Heart right ventricle (tissue), 16 donors: ENCODE measurements at regions of chr20 and their contacts with region 1.

Region 1: GRCh38 chr20:59455402-59456341 is 148.7 kb upstream of the PHACTR3 start:
- DNase-seq: peak in 1 of 2 donors; percentile 28
- ATAC-seq: peak in 7 of 8 donors; percentile 39 to 86 (median 54)
- H3K4me3 ChIP-seq: no peak overlapping the region
- H3K27ac ChIP-seq: no peak overlapping the region
- H3K4me1 ChIP-seq: peaks cover 0 to 16% (median 4%) of the 10 kb centered on the region in 9 donors
- H3K27me3 ChIP-seq: peaks cover 0 to 43% (median 15%) of the 10 kb centered on the region in 7 donors
- CTCF ChIP-seq: peak; percentile 11 to 66 (median 55)

Region 2: GRCh38 chr20:58481481-58482021 is 974.1 kb before region 1 on chr20:
- intact Hi-C with region 1: loop called in 1 of 10 experiments (anchors 5 kb)
- DNase-seq: peak; percentile 36 to 38
- ATAC-seq: peak in 6 of 8 donors; percentile 21 to 70 (median 60)
- H3K4me3 ChIP-seq: no peak overlapping the region
- H3K27ac ChIP-seq: peak overlapping the region in 4 of 10 donors; percentile 28 to 57 (median 39)
- H3K4me1 ChIP-seq: peaks cover 0 to 8% (median 0%) of the 10 kb centered on the region in 9 donors
- H3K27me3 ChIP-seq: peaks cover 0 to 6% (median 0%) of the 10 kb centered on the region in 7 donors
- CTCF ChIP-seq: peak in 8 of 9 donors; percentile 18 to 58 (median 45)

Region 3: DNA sequence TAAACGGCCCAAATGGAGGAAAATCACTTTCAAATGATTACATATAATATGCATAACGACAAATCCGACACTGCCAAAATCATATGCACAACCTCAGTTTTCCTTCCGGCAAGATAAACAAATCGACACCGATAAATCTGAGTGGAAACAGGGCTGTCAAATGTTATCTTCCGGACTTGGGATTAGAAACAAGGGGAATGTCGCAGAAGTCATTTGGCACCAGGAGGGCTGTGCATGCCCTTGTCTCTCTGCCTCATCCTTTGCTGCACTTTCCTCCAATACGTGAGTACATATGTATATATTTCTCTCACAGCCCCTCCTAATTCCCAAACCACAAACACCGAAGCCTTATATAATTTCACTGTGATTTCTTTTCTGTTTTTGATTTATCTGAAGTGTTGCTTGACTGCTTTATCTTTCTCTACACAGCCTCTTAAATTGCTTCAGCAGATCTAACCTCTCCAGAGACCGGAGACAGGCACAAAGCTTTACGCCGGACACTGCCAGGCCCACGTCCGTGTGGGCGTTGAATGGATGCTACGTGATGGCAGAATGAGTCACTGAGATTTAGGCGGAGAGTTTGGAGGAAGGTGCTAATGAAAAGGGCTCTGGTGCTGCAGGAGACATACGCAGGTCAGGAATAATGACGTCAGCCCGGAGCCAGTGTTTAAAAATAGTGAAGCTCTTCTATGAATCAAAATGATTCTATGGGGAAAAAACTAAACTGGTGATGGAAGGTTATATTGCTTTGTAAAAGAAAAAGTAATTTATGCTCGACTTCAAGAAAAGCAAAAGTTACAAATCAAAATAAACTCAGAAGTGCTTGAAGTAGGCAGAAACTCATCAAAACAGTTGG is 392.1 kb before region 1 on chr20:
- intact Hi-C with region 1: loop called in 1 of 10 experiments (anchors 2 kb)
- DNase-seq: peak; percentile 42 to 56
- ATAC-seq: peak; percentile 69 to 99 (median 96)
- H3K4me3 ChIP-seq: peak overlapping the region in 6 of 10 donors; percentile 1 to 39 (median 10)
- H3K27ac ChIP-seq: peak overlapping the region in 8 of 10 donors; percentile 19 to 70 (median 58)
- H3K4me1 ChIP-seq: peaks cover 0 to 21% (median 14%) of the 10 kb centered on the region in 9 donors
- H3K27me3 ChIP-seq: peaks cover 0 to 25% (median 0%) of the 10 kb centered on the region in 7 donors
- CTCF ChIP-seq: no peak

Region 4: DNA sequence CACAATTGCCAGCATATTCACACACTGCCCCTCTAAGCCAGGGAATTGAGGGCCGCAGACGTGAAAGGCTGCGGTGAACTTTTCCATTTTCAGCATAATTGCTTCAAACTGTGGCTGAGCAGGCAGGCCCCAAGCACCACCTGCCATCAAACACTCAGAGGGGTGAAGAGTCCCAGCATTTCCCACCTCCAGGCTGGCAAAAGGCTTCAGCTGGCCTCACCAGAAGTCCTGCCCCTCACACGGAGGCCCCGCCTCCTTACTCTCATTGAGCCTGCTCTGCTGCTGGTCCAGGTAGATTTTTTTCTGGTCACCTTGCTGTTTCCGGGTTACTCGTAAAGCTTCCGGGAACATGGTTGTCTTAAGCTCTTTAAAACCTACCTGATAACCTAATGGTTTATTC is 361.1 kb before region 1 on chr20:
- intact Hi-C with region 1: loop called in 1 of 10 experiments (anchors 10 kb)
- DNase-seq: no peak
- ATAC-seq: no peak
- H3K4me3 ChIP-seq: no peak overlapping the region
- H3K27ac ChIP-seq: no peak overlapping the region
- H3K4me1 ChIP-seq: no peaks in the 10 kb centered on the region
- H3K27me3 ChIP-seq: peaks cover 0 to under 1% (median 0%) of the 10 kb centered on the region in 7 donors
- CTCF ChIP-seq: no peak